Endothelial cell of umbilical vein (primary cell): ENCODE measurements at regions of chr9 and their contacts with region 1.

Region 1: GRCh38 chr9:137353223-137354152 is 51.4 kb upstream of the NRARP start:
- DNase-seq: peak; percentile 62
- H3K4me3 ChIP-seq: no peak overlapping the region
- H3K27ac ChIP-seq: peak overlapping the region; percentile 84
- H3K4me1 ChIP-seq: peaks cover 16% of the 10 kb centered on the region
- H3K27me3 ChIP-seq: no peaks in the 10 kb centered on the region
- CTCF ChIP-seq: no peak
- POLR2A ChIP-seq: no peak

Region 2: DNA sequence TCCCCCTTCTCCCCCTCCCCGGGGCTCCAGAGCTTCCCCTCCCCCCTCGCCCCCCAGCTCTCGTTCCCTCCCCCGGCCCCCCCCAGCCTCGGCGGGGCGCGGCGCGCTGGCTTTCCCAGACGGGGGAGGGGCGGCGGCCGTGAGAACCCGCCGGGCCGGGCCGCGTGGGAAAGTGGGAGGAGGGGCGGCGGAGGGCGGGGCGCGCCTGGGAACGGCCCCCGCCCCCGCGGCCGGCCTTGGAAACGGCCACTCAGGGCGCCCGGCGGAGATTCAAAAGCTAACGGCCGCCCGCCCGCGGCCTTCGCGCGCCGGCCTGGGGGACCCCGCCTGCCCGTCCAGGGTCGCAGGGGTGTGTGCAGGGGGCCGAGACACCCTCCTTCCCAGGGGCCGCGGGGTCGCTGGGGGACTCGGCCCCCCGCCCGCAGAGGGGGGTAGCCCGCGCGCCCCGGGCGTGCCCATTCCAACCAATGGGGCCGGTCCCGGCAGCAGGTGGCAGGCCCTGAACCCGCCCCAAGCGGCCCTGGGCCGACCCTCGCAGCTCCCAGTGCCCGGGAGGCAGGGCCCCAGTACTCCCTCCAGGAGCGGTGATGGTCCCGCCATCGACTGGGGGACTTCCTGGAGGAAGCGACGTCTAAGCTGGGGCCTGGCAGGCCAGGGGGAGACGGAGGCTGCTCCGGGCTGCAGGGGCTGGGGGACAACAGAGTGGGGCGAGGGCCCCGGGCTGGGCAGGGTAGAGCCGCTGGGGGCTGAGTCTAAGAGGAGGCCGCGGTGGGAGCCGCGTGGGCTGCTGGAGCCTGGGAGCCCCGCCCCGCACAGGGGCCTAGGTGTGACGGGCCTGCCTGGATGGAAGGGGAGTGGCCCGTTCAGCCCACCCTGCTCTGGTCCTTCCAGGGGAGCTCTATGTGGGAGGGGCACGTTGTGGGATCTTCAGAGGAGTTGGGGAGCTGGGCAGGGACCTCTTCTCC is 37.2 kb before region 1 on chr9:
- CTCF ChIA-PET with region 1: interaction called, 3 read pairs
- POLR2A ChIA-PET with region 1: no interaction called
- dilution Hi-C with region 1: no loop called
- intact Hi-C with region 1: loop called (anchors 1 kb)
- DNase-seq: peak; percentile 65
- H3K4me3 ChIP-seq: peak overlapping the region in 1 of 3 experiments; percentile 32
- H3K27ac ChIP-seq: peak overlapping the region; percentile 71
- H3K4me1 ChIP-seq: peaks cover 21% of the 10 kb centered on the region
- H3K27me3 ChIP-seq: no peaks in the 10 kb centered on the region
- CTCF ChIP-seq: no peak
- POLR2A ChIP-seq: no peak

Region 3: DNA sequence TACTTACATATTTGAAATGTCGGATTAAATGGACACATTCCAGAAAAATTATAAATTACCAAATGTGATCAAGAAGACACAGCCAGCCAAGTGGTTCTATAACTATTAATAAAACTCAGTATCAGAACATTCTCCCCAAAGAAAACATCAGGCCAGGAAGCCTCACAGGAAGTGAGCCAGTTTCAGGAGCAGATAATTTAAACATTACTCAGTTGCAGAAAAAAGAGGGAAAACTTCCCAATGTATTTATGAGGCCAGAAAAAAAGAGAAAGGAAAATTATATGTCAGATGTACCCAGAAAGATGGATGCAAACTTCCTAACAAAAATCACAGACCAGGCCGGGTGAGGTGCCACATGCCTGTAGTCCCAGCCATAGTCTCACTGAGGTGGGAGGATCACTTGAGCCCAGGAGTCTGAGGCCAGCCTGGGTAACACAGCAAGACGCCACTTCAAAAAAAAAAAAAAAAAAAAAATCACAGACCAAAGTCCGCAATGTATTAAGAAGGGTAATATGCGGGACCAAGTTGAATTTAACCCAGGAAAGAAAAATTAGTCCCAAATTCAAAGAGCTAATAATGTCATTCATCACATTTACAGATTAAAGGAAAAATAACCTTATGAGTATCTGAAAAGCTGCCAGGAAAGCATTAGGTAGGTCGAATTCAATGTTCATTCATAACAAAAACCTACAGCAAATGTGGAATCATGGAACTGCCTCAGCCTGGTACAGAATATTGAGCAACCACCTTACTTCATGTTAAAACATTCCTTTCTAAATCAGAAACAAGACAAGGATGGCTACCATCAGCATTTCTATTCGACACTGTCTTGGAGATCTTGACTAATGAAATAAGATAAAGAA is 14.2 kb before region 1 on chr9:
- CTCF ChIA-PET with region 1: interaction called, 5 read pairs
- POLR2A ChIA-PET with region 1: interaction called, 3 read pairs
- dilution Hi-C with region 1: no loop called
- intact Hi-C with region 1: loop called (anchors 1 kb)
- DNase-seq: peak; percentile 81
- H3K4me3 ChIP-seq: peak overlapping the region in 1 of 3 experiments; percentile 56
- H3K27ac ChIP-seq: peak overlapping the region; percentile 94
- H3K4me1 ChIP-seq: peaks cover 26% of the 10 kb centered on the region
- H3K27me3 ChIP-seq: no peaks in the 10 kb centered on the region
- CTCF ChIP-seq: no peak
- POLR2A ChIP-seq: no peak

Region 4: GRCh38 chr9:137387114-137387890 is 33.8 kb after region 1 on chr9:
- CTCF ChIA-PET with region 1: no interaction called
- POLR2A ChIA-PET with region 1: no interaction called
- dilution Hi-C with region 1: no loop called
- intact Hi-C with region 1: loop called (anchors 5 kb)
- DNase-seq: peak; percentile 80
- H3K4me3 ChIP-seq: no peak overlapping the region
- H3K27ac ChIP-seq: peak overlapping the region; percentile 81
- H3K4me1 ChIP-seq: peaks cover 13% of the 10 kb centered on the region
- H3K27me3 ChIP-seq: no peaks in the 10 kb centered on the region
- CTCF ChIP-seq: no peak
- POLR2A ChIP-seq: no peak

Region 5: GRCh38 chr9:137406876-137407589 is 53.5 kb after region 1 on chr9:
- CTCF ChIA-PET with region 1: no interaction called
- POLR2A ChIA-PET with region 1: no interaction called
- dilution Hi-C with region 1: no loop called
- intact Hi-C with region 1: loop called (anchors 2 kb)
- DNase-seq: peak; percentile 85
- H3K4me3 ChIP-seq: peak overlapping the region in 1 of 3 experiments; percentile 17
- H3K27ac ChIP-seq: no peak overlapping the region
- H3K4me1 ChIP-seq: peaks cover 24% of the 10 kb centered on the region
- H3K27me3 ChIP-seq: no peaks in the 10 kb centered on the region
- CTCF ChIP-seq: peak; percentile 83 to 87
- POLR2A ChIP-seq: no peak

Region 6: GRCh38 chr9:137423004-137423874 is 69.8 kb after region 1 on chr9 and contains the starts of genes EXD3 and NOXA1:
- CTCF ChIA-PET with region 1: no interaction called
- POLR2A ChIA-PET with region 1: no interaction called
- dilution Hi-C with region 1: no loop called
- intact Hi-C with region 1: no loop called
- DNase-seq: peak; percentile 80
- H3K4me3 ChIP-seq: peak within 1 kb of the TSS; percentile 61 to 93 (median 92)
- H3K27ac ChIP-seq: peak within 1 kb of the TSS; percentile 46
- H3K4me1 ChIP-seq: peaks cover 14% of the 10 kb centered on the region
- H3K27me3 ChIP-seq: no peaks in the 10 kb centered on the region
- CTCF ChIP-seq: peak; percentile 77
- POLR2A ChIP-seq: no peak
- total RNA-seq, gene EXD3: 26.6 and 30.3 TPM in 2 replicates
- total RNA-seq, gene NOXA1: 0.91 and 1.3 TPM in 2 replicates